WTC11 (cell line): ENCODE measurements at regions of chr5 and their contacts with region 1.

Region 1: DNA sequence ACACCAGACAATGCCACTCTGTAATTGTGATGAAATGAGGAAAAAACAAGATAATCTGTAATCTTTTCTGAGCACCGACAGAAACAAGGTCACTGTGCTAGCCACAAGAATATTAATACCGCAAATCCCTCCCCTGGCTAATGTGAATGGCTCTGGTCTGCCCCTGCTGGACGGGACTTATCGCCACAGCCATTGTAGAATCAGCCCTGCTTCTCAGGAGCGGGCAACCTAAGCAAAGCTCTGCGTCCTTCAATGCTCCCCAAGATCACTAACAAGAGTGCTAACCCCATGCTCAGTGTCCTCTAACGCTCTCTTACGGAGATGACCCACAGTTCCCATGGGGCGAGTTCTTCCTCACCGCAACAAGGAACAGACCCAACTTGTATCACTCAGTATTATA is 42.7 kb downstream of the OR2V1 start:
- DNase-seq: peak; percentile 62
- ATAC-seq: peak; percentile 96
- H3K4me3 Mint-ChIP-seq: no peak overlapping the region
- H3K27ac Mint-ChIP-seq: no peak overlapping the region
- H3K4me1 Mint-ChIP-seq: peaks cover 18% of the 10 kb centered on the region
- H3K27me3 Mint-ChIP-seq: peaks cover 20% of the 10 kb centered on the region
- CTCF ChIP-seq: no peak

Region 2: GRCh38 chr5:180868960-180869359 is 219.3 kb before region 1 on chr5:
- CTCF ChIA-PET with region 1: interaction called, 25 read pairs
- POLR2A ChIA-PET with region 1: no interaction called
- DNase-seq: peak; percentile 92
- ATAC-seq: peak; percentile 87
- H3K4me3 Mint-ChIP-seq: no peak overlapping the region
- H3K27ac Mint-ChIP-seq: peak overlapping the region; percentile 67; the same call in 1 of the 2 replicates
- H3K4me1 Mint-ChIP-seq: peaks cover 24% of the 10 kb centered on the region
- H3K27me3 Mint-ChIP-seq: no peaks in the 10 kb centered on the region; the same call in 1 of the 2 replicates
- CTCF ChIP-seq: peak; percentile 73

Region 3: GRCh38 chr5:181069767-181070491 is 18.4 kb before region 1 on chr5:
- CTCF ChIA-PET with region 1: interaction called, 12 read pairs
- POLR2A ChIA-PET with region 1: no interaction called
- DNase-seq: peak; percentile 77
- ATAC-seq: peak; percentile 97
- H3K4me3 Mint-ChIP-seq: peak overlapping the region; percentile 61
- H3K27ac Mint-ChIP-seq: no peak overlapping the region
- H3K4me1 Mint-ChIP-seq: peaks cover 11% of the 10 kb centered on the region
- H3K27me3 Mint-ChIP-seq: peaks cover 45% of the 10 kb centered on the region
- CTCF ChIP-seq: no peak

Region 4: DNA sequence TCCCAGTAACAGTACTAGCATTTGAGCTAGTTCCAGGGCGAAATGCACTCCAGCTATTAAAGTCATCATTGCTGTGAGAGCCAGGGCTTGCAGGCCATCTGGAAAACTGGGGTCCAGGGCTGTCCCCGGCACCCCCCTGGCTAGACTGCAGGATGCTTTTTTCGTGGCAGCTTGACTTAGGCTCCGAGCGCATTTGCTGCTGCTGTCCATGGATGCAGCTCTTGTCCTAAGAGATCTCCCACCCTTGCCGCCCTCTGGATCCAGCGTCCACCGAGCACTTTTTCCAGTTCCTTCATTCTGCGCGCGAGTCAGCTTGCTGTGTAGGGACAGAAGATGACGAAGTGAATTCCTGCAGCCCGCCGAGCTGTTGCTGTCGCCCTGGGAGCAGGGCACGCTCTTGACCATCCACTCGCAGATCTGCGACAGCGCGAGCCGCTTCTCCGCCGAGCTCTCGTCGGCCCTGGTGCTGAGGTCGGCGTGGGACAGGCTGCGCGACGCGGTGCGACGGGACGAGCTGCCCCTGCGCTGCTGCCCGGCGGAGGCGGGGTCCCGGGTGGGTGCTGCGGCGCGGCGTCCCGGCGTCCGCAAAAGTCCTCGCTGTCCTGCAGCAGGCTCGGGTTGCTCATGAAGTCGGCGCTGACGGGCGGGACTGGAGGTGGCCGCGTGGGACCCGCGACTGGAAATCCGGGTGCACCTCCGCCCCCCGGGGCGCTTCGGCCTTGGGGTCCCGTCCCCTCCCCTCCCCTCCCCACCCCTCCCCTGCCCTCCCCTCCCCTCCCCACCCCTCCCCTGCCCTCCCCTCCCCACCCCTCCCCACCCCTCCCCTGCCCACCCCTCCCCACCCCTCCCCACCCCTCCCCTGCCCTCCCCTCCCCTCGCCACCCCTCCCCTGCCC is 12.1 kb after region 1 on chr5:
- CTCF ChIA-PET with region 1: interaction called, 13 read pairs
- POLR2A ChIA-PET with region 1: no interaction called
- DNase-seq: peak; percentile 51
- ATAC-seq: no peak
- H3K4me3 Mint-ChIP-seq: peak overlapping the region; percentile 66
- H3K27ac Mint-ChIP-seq: no peak overlapping the region
- H3K4me1 Mint-ChIP-seq: peaks cover 18% of the 10 kb centered on the region
- H3K27me3 Mint-ChIP-seq: peaks cover 42% of the 10 kb centered on the region
- CTCF ChIP-seq: no peak